Activated CD4-positive, alpha-beta memory T cell treated with anti-CD3 and anti-CD28 coated beads for 36 hours (primary cell): ENCODE measurements at regions of chr16 and their contacts with region 1.

Region 1: GRCh38 chr16:67667817-67668494 is 1.3 kb downstream of the C16orf86 start:
- DNase-seq: peak; percentile 90
- H3K4me3 Mint-ChIP-seq: peak overlapping the region; percentile 82
- H3K27ac Mint-ChIP-seq: no peak overlapping the region
- H3K4me1 Mint-ChIP-seq: peaks cover 15% of the 10 kb centered on the region
- H3K27me3 Mint-ChIP-seq: no peaks in the 10 kb centered on the region

Region 2: GRCh38 chr16:67246934-67247697 is 420.8 kb before region 1 on chr16 and contains the start of gene FHOD1:
- CTCF ChIA-PET with region 1: no interaction called
- POLR2A ChIA-PET with region 1: no interaction called
- intact Hi-C with region 1: loop called (anchors 10 kb)
- DNase-seq: peak; percentile 99
- H3K4me3 Mint-ChIP-seq: peak within 1 kb of the TSS; percentile 90
- H3K27ac Mint-ChIP-seq: peak within 1 kb of the TSS; percentile 86
- H3K4me1 Mint-ChIP-seq: peaks cover 47% of the 10 kb centered on the region
- H3K27me3 Mint-ChIP-seq: peaks cover 1% of the 10 kb centered on the region
- total RNA-seq, gene FHOD1: 96.3 to 111 TPM

Region 3: GRCh38 chr16:67641779-67642708 is 25.9 kb before region 1 on chr16:
- CTCF ChIA-PET with region 1: interaction called, 18 read pairs
- POLR2A ChIA-PET with region 1: interaction called, 4 read pairs
- intact Hi-C with region 1: no loop called
- DNase-seq: no peak
- H3K4me3 Mint-ChIP-seq: no peak overlapping the region
- H3K27ac Mint-ChIP-seq: no peak overlapping the region
- H3K4me1 Mint-ChIP-seq: peaks cover 11% of the 10 kb centered on the region
- H3K27me3 Mint-ChIP-seq: no peaks in the 10 kb centered on the region

Region 4: GRCh38 chr16:67806428-67807147 is 138.6 kb after region 1 on chr16 and contains the starts of genes RANBP10 and TSNAXIP1:
- CTCF ChIA-PET with region 1: interaction called, 5 read pairs
- POLR2A ChIA-PET with region 1: interaction called, 4 read pairs
- intact Hi-C with region 1: loop called (anchors 5 kb)
- DNase-seq: peak; percentile 98
- H3K4me3 Mint-ChIP-seq: peak within 1 kb of the TSS; percentile 93
- H3K27ac Mint-ChIP-seq: peak within 1 kb of the TSS; percentile 91
- H3K4me1 Mint-ChIP-seq: peaks cover 39% of the 10 kb centered on the region
- H3K27me3 Mint-ChIP-seq: no peaks in the 10 kb centered on the region
- total RNA-seq, gene RANBP10: 14.9 to 18.1 TPM
- total RNA-seq, gene TSNAXIP1: 0.77 to 0.81 TPM

Region 5: DNA sequence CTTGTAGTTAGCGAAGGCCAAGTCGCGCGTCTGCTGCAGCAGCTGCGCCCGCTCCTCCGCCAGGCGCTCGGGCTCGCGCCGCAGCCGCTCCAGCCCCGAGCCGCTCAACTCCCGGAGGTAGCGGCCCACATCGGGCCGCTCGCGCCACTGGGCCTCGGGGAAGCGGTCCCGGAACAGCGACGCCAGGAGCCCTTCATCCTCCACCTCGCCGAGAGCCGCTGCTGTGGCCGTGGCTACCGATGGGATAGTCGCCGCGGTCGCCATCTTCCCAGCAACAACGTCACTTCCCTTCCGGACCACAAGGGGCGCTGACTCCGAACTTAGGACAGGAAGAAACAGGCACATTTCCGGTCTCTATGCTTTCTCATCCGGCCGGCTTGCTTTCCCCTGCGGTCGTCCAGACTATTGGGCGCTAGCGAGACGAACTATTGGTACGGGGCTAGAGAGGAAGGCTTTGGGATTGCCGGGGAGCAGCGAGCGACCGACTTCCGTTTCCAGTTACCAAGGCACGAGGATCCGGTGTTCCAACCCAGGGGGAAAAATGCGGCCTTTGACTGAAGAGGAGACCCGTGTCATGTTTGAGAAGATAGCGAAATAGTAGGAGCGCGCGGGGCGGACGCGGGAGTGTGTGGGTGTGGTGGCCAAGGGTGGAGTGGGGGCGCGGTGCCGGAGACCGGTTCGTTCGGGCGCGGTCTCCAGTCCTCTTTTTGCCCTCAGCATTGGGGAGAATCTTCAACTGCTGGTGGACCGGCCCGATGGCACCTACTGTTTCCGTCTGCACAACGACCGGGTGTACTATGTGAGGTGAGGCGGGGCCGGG is 1671.5 kb after region 1 on chr16 and contains the starts of genes COG8 and NIP7:
- CTCF ChIA-PET with region 1: no interaction called
- POLR2A ChIA-PET with region 1: no interaction called
- intact Hi-C with region 1: loop called (anchors 10 kb)
- DNase-seq: peak; percentile 96
- H3K4me3 Mint-ChIP-seq: peak within 1 kb of the TSS; percentile 96
- H3K27ac Mint-ChIP-seq: peak within 1 kb of the TSS; percentile 95
- H3K4me1 Mint-ChIP-seq: peaks cover 38% of the 10 kb centered on the region
- H3K27me3 Mint-ChIP-seq: no peaks in the 10 kb centered on the region
- total RNA-seq, gene COG8: 25.4 to 27.9 TPM
- total RNA-seq, gene NIP7: 43.3 to 47.1 TPM